Testis (tissue), 5 donors: ENCODE measurements at regions of chr16 and their contacts with region 1.

Region 1: DNA sequence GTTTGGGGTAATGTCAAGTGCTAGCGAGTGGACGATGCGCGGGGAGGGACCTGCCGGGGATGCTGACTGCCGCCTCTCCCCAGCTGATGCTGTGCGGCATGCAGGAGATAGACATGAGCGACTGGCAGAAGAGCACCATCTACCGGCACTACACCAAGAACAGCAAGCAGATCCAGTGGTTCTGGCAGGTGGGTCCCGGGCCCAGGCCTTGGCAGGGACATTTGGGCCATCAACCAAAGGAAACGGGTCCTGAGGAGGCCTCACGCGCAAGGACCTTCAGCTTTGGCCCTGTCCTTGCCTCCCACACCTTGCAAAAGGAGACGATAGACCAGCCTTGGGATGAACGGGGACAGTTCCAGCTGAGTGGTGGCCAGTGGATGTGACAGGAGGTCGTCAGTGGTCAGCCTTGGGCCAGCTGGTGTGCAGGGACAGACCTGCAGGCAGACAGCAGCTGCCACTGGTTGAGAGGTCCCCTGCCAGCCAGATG is 13.6 kb upstream of the CLEC18A start:
- DNase-seq: peak; percentile 38
- H3K4me3 ChIP-seq: no peak overlapping the region
- H3K27ac ChIP-seq: no peak overlapping the region
- H3K4me1 ChIP-seq: no peaks in the 10 kb centered on the region
- H3K27me3 ChIP-seq: no peaks in the 10 kb centered on the region
- CTCF ChIP-seq: no peak
- POLR2A ChIP-seq: no peak

Region 2: GRCh38 chr16:69796351-69797118 is 141.0 kb before region 1 on chr16:
- intact Hi-C with region 1: loop called (anchors 5 kb)
- DNase-seq: peak; percentile 41
- H3K4me3 ChIP-seq: no peak overlapping the region
- H3K27ac ChIP-seq: no peak overlapping the region
- H3K4me1 ChIP-seq: no peaks in the 10 kb centered on the region
- H3K27me3 ChIP-seq: no peaks in the 10 kb centered on the region
- CTCF ChIP-seq: peak; percentile 92 to 95 (median 94)
- POLR2A ChIP-seq: no peak